ENCODE measurements at regions of chr5 and their contacts with region 1.

Region 1: DNA sequence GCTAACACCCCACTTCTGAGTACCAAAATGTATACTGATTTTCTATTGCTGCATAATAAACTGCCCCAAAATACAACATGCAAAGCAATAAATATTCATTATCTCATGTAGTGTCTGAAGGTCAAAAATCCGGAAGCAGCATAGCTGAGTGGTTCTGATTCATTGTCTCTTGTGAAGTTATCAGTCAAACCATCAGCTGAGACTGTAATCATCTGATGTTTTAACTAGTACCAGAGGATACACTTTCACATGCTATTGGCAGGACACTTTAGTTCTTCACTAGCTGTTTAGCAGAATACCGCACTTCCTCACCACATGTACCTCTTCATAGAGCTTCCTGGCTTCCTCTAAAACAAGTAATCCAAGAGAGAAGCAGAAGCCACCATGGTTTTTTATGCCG is 12.7 kb upstream of the TMEM161B start:
- DNase-seq: no peak
- H3K4me3 Mint-ChIP-seq: no peak overlapping the region
- H3K27ac Mint-ChIP-seq: no peak overlapping the region
- H3K4me1 Mint-ChIP-seq: peaks cover 11% of the 10 kb centered on the region
- H3K27me3 Mint-ChIP-seq: no peaks in the 10 kb centered on the region

Region 2: DNA sequence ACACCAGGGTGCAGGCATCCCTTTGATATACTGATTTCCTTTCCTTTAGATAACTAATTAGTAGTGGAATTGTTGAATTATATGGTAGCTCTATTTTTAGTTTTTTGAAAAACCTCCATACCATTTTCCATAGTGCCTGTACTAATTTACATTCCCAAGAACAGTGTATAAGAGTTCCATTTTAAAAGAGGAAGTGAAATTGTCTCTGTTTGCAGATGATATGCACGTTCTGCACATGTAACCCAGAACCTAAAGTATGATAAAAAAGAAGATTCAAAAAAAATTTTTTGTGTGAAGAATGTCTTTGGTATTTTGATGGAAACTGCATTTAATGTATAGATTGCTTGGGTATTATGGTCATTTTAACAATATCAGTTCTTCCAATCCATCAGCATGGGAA is 444.6 kb before region 1 on chr5:
- intact Hi-C with region 1: no loop called
- DNase-seq: no peak
- H3K4me3 Mint-ChIP-seq: no peak overlapping the region
- H3K27ac Mint-ChIP-seq: no peak overlapping the region
- H3K4me1 Mint-ChIP-seq: no peaks in the 10 kb centered on the region
- H3K27me3 Mint-ChIP-seq: no peaks in the 10 kb centered on the region

Region 3: GRCh38 chr5:88214655-88215054 is 66.7 kb before region 1 on chr5:
- intact Hi-C with region 1: loop called (anchors 5 kb)
- DNase-seq: no peak
- H3K4me3 Mint-ChIP-seq: no peak overlapping the region
- H3K27ac Mint-ChIP-seq: no peak overlapping the region
- H3K4me1 Mint-ChIP-seq: peaks cover 2% of the 10 kb centered on the region
- H3K27me3 Mint-ChIP-seq: no peaks in the 10 kb centered on the region